GM12878 (cell line): ENCODE measurements at regions of chr19 and their contacts with region 1.

Region 1: GRCh38 chr19:2610637-2611482 is 91.6 kb downstream of the GNG7 start:
- DNase-seq: peak; percentile 91
- ATAC-seq: peak; percentile 58
- H3K4me3 ChIP-seq: peak overlapping the region; percentile 72; the same call in 1 of the 2 replicates
- H3K27ac ChIP-seq: peak overlapping the region; percentile 96
- H3K4me1 ChIP-seq: peaks cover 46% of the 10 kb centered on the region
- H3K27me3 ChIP-seq: no peaks in the 10 kb centered on the region
- CTCF ChIP-seq: peak; percentile 93 to 97 (median 94); a peak in 5 of 6 replicates
- EP300 ChIP-seq: peak; percentile 68 to 90; a peak in 3 of 4 replicates
- POLR2A ChIP-seq: no peak; the same call in 1 of the 2 replicates
- RAD21 ChIP-seq: peak; percentile 91

Region 2: GRCh38 chr19:2151339-2152229 is 459.3 kb before region 1 on chr19 and contains the start of gene AP3D1:
- CTCF ChIA-PET with region 1: no interaction called
- POLR2A ChIA-PET with region 1: no interaction called
- RAD21 ChIA-PET with region 1: interaction called, 10 read pairs
- SMC1A ChIA-PET with region 1: no interaction called
- in situ Hi-C with region 1: loop called (anchors 10 kb)
- intact Hi-C with region 1: no loop called
- DNase-seq: peak; percentile 98
- ATAC-seq: peak; percentile 89
- H3K4me3 ChIP-seq: peak within 1 kb of the TSS; percentile 96
- H3K27ac ChIP-seq: peak within 1 kb of the TSS; percentile 91
- H3K4me1 ChIP-seq: peaks cover 20% of the 10 kb centered on the region
- H3K27me3 ChIP-seq: no peaks in the 10 kb centered on the region
- CTCF ChIP-seq: no peak
- EP300 ChIP-seq: no peak
- POLR2A ChIP-seq: peak; percentile 82
- RAD21 ChIP-seq: no peak
- polyA plus RNA-seq, gene AP3D1: 1.5 to 3.0 TPM

Region 3: GRCh38 chr19:2455851-2456570 is 154.8 kb before region 1 on chr19:
- CTCF ChIA-PET with region 1: interaction called, 4 read pairs
- POLR2A ChIA-PET with region 1: interaction called, 10 read pairs
- RAD21 ChIA-PET with region 1: interaction called, 4 read pairs
- SMC1A ChIA-PET with region 1: interaction called, 3 read pairs
- in situ Hi-C with region 1: no loop called
- intact Hi-C with region 1: no loop called
- DNase-seq: no peak
- ATAC-seq: peak; percentile 80
- H3K4me3 ChIP-seq: peak overlapping the region; percentile 99
- H3K27ac ChIP-seq: peak overlapping the region; percentile 90
- H3K4me1 ChIP-seq: peaks cover 19% of the 10 kb centered on the region
- H3K27me3 ChIP-seq: no peaks in the 10 kb centered on the region
- CTCF ChIP-seq: no peak
- EP300 ChIP-seq: no peak
- POLR2A ChIP-seq: peak; percentile 26; the same call in 1 of the 2 replicates
- RAD21 ChIP-seq: no peak

Region 4: GRCh38 chr19:2543463-2544442 is 67.1 kb before region 1 on chr19:
- CTCF ChIA-PET with region 1: interaction called, 5 read pairs
- POLR2A ChIA-PET with region 1: interaction called, 7 read pairs
- RAD21 ChIA-PET with region 1: interaction called, 19 read pairs
- SMC1A ChIA-PET with region 1: interaction called, 15 read pairs
- in situ Hi-C with region 1: no loop called
- intact Hi-C with region 1: no loop called
- DNase-seq: no peak
- ATAC-seq: peak; percentile 82
- H3K4me3 ChIP-seq: peak overlapping the region; percentile 53
- H3K27ac ChIP-seq: peak overlapping the region; percentile 64
- H3K4me1 ChIP-seq: peaks cover 35% of the 10 kb centered on the region
- H3K27me3 ChIP-seq: no peaks in the 10 kb centered on the region
- CTCF ChIP-seq: peak in 1 of 3 experiments; percentile 18; a peak in 1 of 6 replicates
- EP300 ChIP-seq: no peak
- POLR2A ChIP-seq: peak; percentile 41; the same call in 1 of the 2 replicates
- RAD21 ChIP-seq: 0 out of 2 replicates have a peak, but pooled peaks have one; percentile 3

Region 5: GRCh38 chr19:2578901-2579677 is 31.8 kb before region 1 on chr19:
- CTCF ChIA-PET with region 1: interaction called, 50 read pairs
- POLR2A ChIA-PET with region 1: interaction called, 4 read pairs
- RAD21 ChIA-PET with region 1: interaction called, 39 read pairs
- SMC1A ChIA-PET with region 1: interaction called, 20 read pairs
- in situ Hi-C with region 1: no loop called
- intact Hi-C with region 1: no loop called
- DNase-seq: no peak
- ATAC-seq: peak; percentile 90
- H3K4me3 ChIP-seq: no peak overlapping the region
- H3K27ac ChIP-seq: no peak overlapping the region
- H3K4me1 ChIP-seq: peaks cover 7% of the 10 kb centered on the region; the same call in 1 of the 2 replicates
- H3K27me3 ChIP-seq: no peaks in the 10 kb centered on the region
- CTCF ChIP-seq: peak; percentile 43 to 79 (median 72); a peak in 5 of 6 replicates
- EP300 ChIP-seq: no peak
- POLR2A ChIP-seq: no peak
- RAD21 ChIP-seq: peak; percentile 78

Region 6: GRCh38 chr19:2636897-2637683 is 26.2 kb after region 1 on chr19:
- CTCF ChIA-PET with region 1: interaction called, 318 read pairs
- POLR2A ChIA-PET with region 1: interaction called, 7 read pairs
- RAD21 ChIA-PET with region 1: interaction called, 46 read pairs
- SMC1A ChIA-PET with region 1: interaction called, 26 read pairs
- in situ Hi-C with region 1: no loop called
- intact Hi-C with region 1: loop called (anchors 1 kb)
- DNase-seq: no peak
- ATAC-seq: peak; percentile 83
- H3K4me3 ChIP-seq: no peak overlapping the region
- H3K27ac ChIP-seq: no peak overlapping the region
- H3K4me1 ChIP-seq: peaks cover 26% of the 10 kb centered on the region
- H3K27me3 ChIP-seq: no peaks in the 10 kb centered on the region
- CTCF ChIP-seq: peak; percentile 82 to 97 (median 88)
- EP300 ChIP-seq: no peak
- POLR2A ChIP-seq: no peak; the same call in 1 of the 2 replicates
- RAD21 ChIP-seq: peak; percentile 95